ENCODE measurements at regions of chr20 and their contacts with region 1.

Region 1: GRCh38 chr20:61120595-61121515 is 131.2 kb upstream of the CDH4 start:
- DNase-seq: peak in 1 of 2 experiments; percentile 92
- ATAC-seq: peak; percentile 8 to 66; a peak in 3 of 6 replicates
- H3K4me3 ChIP-seq: no peak overlapping the region
- H3K27ac ChIP-seq: peak overlapping the region; percentile 86 to 93
- H3K4me1 ChIP-seq: peaks cover 53% of the 10 kb centered on the region
- CTCF ChIP-seq: peak; percentile 66
- EP300 ChIP-seq: 0 out of 5 replicates have a peak, but pooled peaks of 1 of the 2 experiments have one; percentile 24
- POLR2A ChIP-seq: no peak
- RAD21 ChIP-seq: peak; percentile 79 to 80

Region 2: DNA sequence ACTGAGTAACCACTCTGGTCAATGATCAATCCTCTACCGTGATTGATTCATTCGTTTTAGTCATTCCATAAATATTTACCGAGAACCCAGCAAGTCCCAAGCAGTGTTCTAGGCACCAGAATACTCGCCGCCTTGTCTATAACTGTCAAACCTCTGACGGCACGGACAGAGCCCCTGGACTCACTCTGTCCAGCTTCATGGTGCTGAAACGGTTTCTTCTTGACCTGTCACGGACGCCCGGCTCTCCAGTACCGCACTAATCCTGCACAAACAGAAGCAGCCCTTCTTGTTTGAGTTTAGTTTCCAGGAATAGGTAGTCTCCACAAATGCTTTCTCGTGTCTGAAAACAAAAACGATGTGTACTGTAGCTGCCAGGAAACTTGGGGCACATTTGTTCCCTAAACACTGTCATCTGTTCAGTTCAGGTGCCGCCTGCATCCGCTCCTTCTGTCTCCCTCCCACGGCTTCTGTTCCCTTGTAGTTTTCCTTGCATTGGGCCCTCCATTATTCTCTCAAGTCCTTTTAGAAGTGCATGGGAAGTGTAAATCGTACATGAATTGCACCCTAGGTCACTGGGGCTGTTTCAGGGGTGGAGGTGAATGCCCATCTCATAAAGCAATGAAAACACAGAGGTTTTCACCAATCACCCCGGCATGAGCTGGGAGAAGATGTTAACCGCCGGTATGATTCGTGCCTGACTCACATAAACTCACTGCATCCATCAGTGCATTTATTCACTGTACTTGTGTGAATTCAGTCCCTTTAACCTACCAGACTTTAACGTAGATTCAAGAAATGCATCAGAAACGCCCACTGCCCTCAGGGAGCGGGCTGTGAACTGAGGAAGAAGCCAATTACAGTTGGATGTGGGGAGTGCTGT is 78.1 kb before region 1 on chr20:
- CTCF ChIA-PET with region 1: no interaction called
- POLR2A ChIA-PET with region 1: no interaction called
- DNase-seq: no peak
- ATAC-seq: 0 out of 6 replicates have a peak, but pooled peaks of 1 of the 2 experiments have one; percentile 27
- H3K4me3 ChIP-seq: no peak overlapping the region
- H3K27ac ChIP-seq: no peak overlapping the region
- H3K4me1 ChIP-seq: peaks cover 4% of the 10 kb centered on the region; the same call in 1 of the 3 replicates
- CTCF ChIP-seq: no peak
- EP300 ChIP-seq: no peak
- POLR2A ChIP-seq: no peak
- RAD21 ChIP-seq: no peak

Region 3: GRCh38 chr20:61185841-61186601 is 65.2 kb after region 1 on chr20:
- CTCF ChIA-PET with region 1: interaction called, 11 read pairs
- POLR2A ChIA-PET with region 1: interaction called, 20 read pairs
- DNase-seq: peak; percentile 66 to 85
- ATAC-seq: peak; percentile 95 to 96
- H3K4me3 ChIP-seq: no peak overlapping the region
- H3K27ac ChIP-seq: peak overlapping the region; percentile 81 to 87
- H3K4me1 ChIP-seq: peaks cover 39% of the 10 kb centered on the region
- CTCF ChIP-seq: no peak
- EP300 ChIP-seq: peak; percentile 57 to 82; a peak in 2 of 5 replicates
- POLR2A ChIP-seq: no peak
- RAD21 ChIP-seq: no peak; a peak in 1 of 5 replicates

Measured in A549 (cell line).